ENCODE measurements at regions of chr20 and their contacts with region 1.

Region 1: GRCh38 chr20:59782986-59783640 is 150.3 kb downstream of the SYCP2 start:
- DNase-seq: peak; percentile 64
- ATAC-seq: peak; percentile 63
- H3K4me3 Mint-ChIP-seq: no peak overlapping the region
- H3K27ac Mint-ChIP-seq: no peak overlapping the region
- H3K4me1 Mint-ChIP-seq: no peaks in the 10 kb centered on the region
- H3K27me3 Mint-ChIP-seq: no peaks in the 10 kb centered on the region

Region 2: GRCh38 chr20:59802471-59803221 is 19.5 kb after region 1 on chr20:
- CTCF ChIA-PET with region 1: no interaction called
- DNase-seq: peak; percentile 15
- ATAC-seq: no peak
- H3K4me3 Mint-ChIP-seq: no peak overlapping the region
- H3K27ac Mint-ChIP-seq: no peak overlapping the region
- H3K4me1 Mint-ChIP-seq: no peaks in the 10 kb centered on the region
- H3K27me3 Mint-ChIP-seq: peaks cover 7% of the 10 kb centered on the region

Region 3: GRCh38 chr20:59850018-59850641 is 67.0 kb after region 1 on chr20:
- CTCF ChIA-PET with region 1: interaction called, 20 read pairs
- DNase-seq: no peak
- ATAC-seq: no peak
- H3K4me3 Mint-ChIP-seq: no peak overlapping the region
- H3K27ac Mint-ChIP-seq: no peak overlapping the region
- H3K4me1 Mint-ChIP-seq: no peaks in the 10 kb centered on the region
- H3K27me3 Mint-ChIP-seq: no peaks in the 10 kb centered on the region